Heart left ventricle (tissue), 16 donors: ENCODE measurements at regions of chr1 and their contacts with region 1.

Region 1: DNA sequence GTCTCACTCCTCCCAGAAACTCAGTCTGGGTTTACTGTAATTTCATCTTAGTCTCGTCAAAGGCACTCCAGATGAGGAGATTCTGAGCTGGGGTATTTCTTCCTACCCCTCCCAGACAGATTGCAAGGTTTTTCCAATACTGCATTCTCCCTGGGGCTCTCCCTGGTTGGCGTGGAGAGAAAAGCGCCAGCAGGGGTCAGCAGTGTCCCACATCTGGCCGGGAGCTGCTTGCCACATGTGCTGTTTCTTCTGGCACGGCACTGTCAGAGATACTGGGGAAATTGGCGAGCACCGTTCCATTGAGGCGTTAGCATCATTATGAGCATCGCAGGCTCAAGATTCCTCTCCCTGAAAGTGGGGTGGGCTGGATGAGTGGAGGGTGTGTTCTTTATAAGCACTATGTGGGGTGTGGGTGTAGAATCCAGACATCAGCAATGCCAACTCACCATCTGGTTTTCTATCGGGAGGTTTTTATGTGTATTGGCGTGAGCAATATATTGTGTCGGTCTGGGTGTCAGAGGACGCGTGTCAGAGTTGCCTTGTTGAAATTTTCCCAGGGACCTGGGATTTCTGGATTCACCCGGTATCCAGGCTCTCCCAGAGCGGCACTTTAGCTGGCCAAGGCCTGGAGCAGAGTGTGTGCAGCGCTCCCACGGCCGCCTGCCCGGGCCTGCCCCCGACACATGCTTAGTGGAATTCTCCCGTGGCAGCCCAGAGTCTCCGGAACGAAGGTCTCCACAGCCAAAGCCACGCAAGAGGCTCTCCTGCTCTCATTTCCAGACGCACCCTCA is 8.0 kb upstream of the NAV1 start:
- DNase-seq: peak; percentile 89 to 91 (median 90)
- ATAC-seq: peak; percentile 75 to 91 (median 88)
- H3K4me3 ChIP-seq: no peak overlapping the region
- H3K27ac ChIP-seq: peak overlapping the region; percentile 25 to 86 (median 64)
- H3K4me1 ChIP-seq: peaks cover 4 to 49% (median 35%) of the 10 kb centered on the region in 12 donors
- H3K27me3 ChIP-seq: no peaks in the 10 kb centered on the region
- CTCF ChIP-seq: peak; percentile 75 to 90 (median 82)
- POLR2A ChIP-seq: no peak

Region 2: GRCh38 chr1:201582705-201583442 is 51.9 kb after region 1 on chr1:
- intact Hi-C with region 1: loop called in 1 of 10 experiments (anchors 5 kb)
- DNase-seq: peak in 3 of 5 donors; percentile 27 to 52 (median 43)
- ATAC-seq: peak in 3 of 4 donors; percentile 9 to 43 (median 23)
- H3K4me3 ChIP-seq: no peak overlapping the region
- H3K27ac ChIP-seq: peak overlapping the region in 2 of 12 donors; percentile 20 to 46
- H3K4me1 ChIP-seq: peaks cover 0 to 39% (median 22%) of the 10 kb centered on the region in 12 donors
- H3K27me3 ChIP-seq: no peaks in the 10 kb centered on the region
- CTCF ChIP-seq: no peak
- POLR2A ChIP-seq: no peak

Region 3: DNA sequence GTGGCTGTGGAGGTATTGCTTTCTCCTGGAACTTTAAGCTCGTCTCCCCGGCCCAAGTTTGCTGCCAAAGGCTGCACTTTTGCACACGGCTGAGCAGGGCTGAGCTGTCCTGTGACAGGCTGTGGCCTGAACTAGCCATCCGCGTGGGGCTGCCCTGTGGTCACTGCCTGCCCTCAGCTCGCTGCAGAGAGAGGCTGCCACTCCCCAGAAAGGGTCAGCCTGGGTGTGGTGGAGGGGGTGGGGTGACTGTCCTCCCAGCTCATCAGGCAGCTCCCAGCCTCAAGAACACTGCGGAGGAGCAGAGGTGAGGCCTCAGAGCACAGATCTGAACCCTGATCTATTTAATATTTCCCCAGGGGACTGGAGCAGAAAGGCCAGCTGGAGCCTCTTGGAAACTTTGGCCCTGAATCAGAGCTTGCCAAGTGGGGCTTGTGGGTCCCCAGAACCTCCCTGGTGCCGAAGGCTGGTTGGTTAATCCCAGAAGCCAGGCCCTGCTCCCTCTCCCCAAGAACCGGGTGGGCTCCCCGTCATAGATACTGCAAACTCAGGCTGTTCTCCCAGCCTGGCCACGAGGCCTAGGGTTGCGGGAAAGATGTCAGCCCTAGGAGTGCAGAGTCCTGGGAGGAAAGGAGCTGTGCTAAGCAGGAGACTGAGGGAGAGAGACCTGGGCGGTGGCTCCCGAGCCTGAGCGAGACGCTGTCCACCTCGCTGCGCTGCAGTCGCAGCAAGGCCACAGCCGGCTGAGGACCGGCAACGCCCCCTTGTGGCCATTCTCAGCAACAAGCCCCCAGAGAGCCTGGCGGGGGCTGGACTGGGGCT is 172.9 kb after region 1 on chr1:
- intact Hi-C with region 1: loop called in 4 of 10 experiments (anchors 1 to 2 kb)
- DNase-seq: peak; percentile 85 to 91 (median 88)
- ATAC-seq: peak; percentile 83 to 93 (median 84)
- H3K4me3 ChIP-seq: no peak overlapping the region
- H3K27ac ChIP-seq: peak overlapping the region in 11 of 12 donors; percentile 30 to 79 (median 60)
- H3K4me1 ChIP-seq: peaks cover 8 to 41% (median 24%) of the 10 kb centered on the region in 12 donors
- H3K27me3 ChIP-seq: no peaks in the 10 kb centered on the region
- CTCF ChIP-seq: peak; percentile 96 to 100 (median 98)
- POLR2A ChIP-seq: no peak

Region 4: GRCh38 chr1:201970334-201971159 is 439.6 kb after region 1 on chr1:
- intact Hi-C with region 1: loop called in 1 of 10 experiments (anchors 5 kb)
- DNase-seq: no peak
- ATAC-seq: peak in 2 of 4 donors; percentile 36 to 37
- H3K4me3 ChIP-seq: no peak overlapping the region
- H3K27ac ChIP-seq: no peak overlapping the region
- H3K4me1 ChIP-seq: peaks cover 0 to 14% (median 5%) of the 10 kb centered on the region in 12 donors
- H3K27me3 ChIP-seq: no peaks in the 10 kb centered on the region
- CTCF ChIP-seq: no peak
- POLR2A ChIP-seq: no peak

Region 5: DNA sequence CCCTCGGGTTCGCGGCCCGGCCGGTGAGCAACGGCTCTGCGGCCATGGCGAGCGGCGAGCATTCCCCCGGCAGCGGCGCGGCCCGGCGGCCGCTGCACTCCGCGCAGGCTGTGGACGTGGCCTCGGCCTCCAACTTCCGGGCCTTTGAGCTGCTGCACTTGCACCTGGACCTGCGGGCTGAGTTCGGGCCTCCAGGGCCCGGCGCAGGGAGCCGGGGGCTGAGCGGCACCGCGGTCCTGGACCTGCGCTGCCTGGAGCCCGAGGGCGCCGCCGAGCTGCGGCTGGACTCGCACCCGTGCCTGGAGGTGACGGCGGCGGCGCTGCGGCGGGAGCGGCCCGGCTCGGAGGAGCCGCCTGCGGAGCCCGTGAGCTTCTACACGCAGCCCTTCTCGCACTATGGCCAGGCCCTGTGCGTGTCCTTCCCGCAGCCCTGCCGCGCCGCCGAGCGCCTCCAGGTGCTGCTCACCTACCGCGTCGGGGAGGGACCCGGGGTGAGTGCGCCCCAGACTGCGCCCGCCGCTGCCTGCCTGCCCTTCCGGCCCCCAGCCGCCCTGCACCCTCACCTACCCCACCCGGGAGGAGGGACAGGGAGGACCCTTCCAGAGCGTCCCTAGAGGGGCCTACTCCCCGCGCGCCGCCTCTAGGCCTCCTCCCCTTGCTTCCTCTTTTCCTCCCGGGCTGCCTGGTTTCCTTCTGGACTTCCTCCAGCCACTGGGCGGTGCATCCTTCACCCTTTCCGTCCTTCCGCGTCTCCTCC is 451.9 kb after region 1 on chr1 and contains the start of gene RNPEP:
- intact Hi-C with region 1: loop called in 1 of 10 experiments (anchors 10 kb)
- DNase-seq: peak; percentile 81 to 85 (median 83)
- ATAC-seq: peak; percentile 65 to 92 (median 88)
- H3K4me3 ChIP-seq: peak within 1 kb of the TSS; percentile 75 to 100 (median 96)
- H3K27ac ChIP-seq: peak within 1 kb of the TSS; percentile 43 to 98 (median 94)
- H3K4me1 ChIP-seq: peaks cover 0 to 39% (median 16%) of the 10 kb centered on the region in 12 donors
- H3K27me3 ChIP-seq: no peaks in the 10 kb centered on the region
- CTCF ChIP-seq: peak in 4 of 12 donors; percentile 4 to 18 (median 10)
- POLR2A ChIP-seq: peak; percentile 33 to 70
- total RNA-seq, gene RNPEP: 14.1 to 36.2 (median 18.1) TPM